Activated CD8-positive, alpha-beta T cell treated with anti-CD3 and anti-CD28 coated beads for 36 hours (primary cell): ENCODE measurements at regions of chr2 and their contacts with region 1.

Region 1: GRCh38 chr2:25700221-25700660 is 26.9 kb upstream of the DTNB start:
- DNase-seq: peak; percentile 52
- ATAC-seq: peak; percentile 81
- H3K4me3 Mint-ChIP-seq: no peak overlapping the region
- H3K27ac Mint-ChIP-seq: no peak overlapping the region
- H3K4me1 Mint-ChIP-seq: peaks cover 3% of the 10 kb centered on the region
- H3K27me3 Mint-ChIP-seq: no peaks in the 10 kb centered on the region
- CTCF ChIP-seq: peak; percentile 74

Region 2: GRCh38 chr2:24382363-24383073 is 1317.7 kb before region 1 on chr2:
- CTCF ChIA-PET with region 1: no interaction called
- POLR2A ChIA-PET with region 1: no interaction called
- intact Hi-C with region 1: no loop called
- DNase-seq: peak; percentile 57
- ATAC-seq: peak; percentile 67
- H3K4me3 Mint-ChIP-seq: no peak overlapping the region
- H3K27ac Mint-ChIP-seq: no peak overlapping the region
- H3K4me1 Mint-ChIP-seq: no peaks in the 10 kb centered on the region
- H3K27me3 Mint-ChIP-seq: no peaks in the 10 kb centered on the region
- CTCF ChIP-seq: peak; percentile 57

Region 3: DNA sequence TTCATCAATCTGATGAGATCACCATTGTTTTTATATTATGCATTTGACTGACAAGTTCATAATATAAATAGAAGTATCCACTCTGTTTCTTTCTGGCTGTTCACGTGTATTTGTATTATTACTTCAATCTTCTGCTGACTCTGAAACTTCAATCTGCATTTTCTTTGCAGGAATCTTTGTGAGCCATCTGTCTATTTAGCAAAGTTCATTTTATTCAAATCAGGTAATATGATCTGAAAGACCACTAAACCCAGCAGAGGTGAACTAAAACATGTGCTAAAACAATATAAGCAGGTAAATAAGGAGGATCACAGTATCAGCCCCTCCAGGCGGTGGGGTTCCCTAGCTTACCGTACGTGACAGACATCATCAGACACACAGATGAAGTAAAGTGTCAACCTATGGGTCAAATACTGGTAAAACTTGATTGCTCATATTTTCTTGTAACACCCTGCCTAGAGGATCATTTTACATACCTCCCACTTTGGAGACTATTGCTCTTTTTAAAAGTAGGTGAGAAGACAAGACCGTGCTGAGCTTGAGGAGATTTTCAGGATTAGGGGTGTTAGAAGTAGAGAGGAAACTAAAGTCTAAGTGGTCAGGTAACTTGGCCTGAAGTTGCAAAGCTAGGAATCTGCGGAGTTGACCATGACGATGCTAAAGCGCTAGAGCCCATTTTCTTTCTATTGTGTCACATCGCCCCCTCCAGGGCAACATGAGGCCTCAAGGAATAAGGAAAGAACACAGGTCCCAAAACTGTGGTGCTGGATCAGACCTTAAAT is 35.9 kb before region 1 on chr2:
- CTCF ChIA-PET with region 1: interaction called, 12 read pairs
- POLR2A ChIA-PET with region 1: no interaction called
- intact Hi-C with region 1: no loop called
- DNase-seq: peak; percentile 56
- ATAC-seq: peak; percentile 60
- H3K4me3 Mint-ChIP-seq: peak overlapping the region; percentile 31
- H3K27ac Mint-ChIP-seq: no peak overlapping the region
- H3K4me1 Mint-ChIP-seq: peaks cover 15% of the 10 kb centered on the region
- H3K27me3 Mint-ChIP-seq: no peaks in the 10 kb centered on the region
- CTCF ChIP-seq: peak; percentile 33

Region 4: GRCh38 chr2:25674077-25674362 is 26.2 kb before region 1 on chr2:
- CTCF ChIA-PET with region 1: interaction called, 10 read pairs
- POLR2A ChIA-PET with region 1: interaction called, 4 read pairs
- intact Hi-C with region 1: no loop called
- DNase-seq: no peak
- ATAC-seq: no peak
- H3K4me3 Mint-ChIP-seq: peak overlapping the region; percentile 75
- H3K27ac Mint-ChIP-seq: peak overlapping the region; percentile 49
- H3K4me1 Mint-ChIP-seq: peaks cover 23% of the 10 kb centered on the region
- H3K27me3 Mint-ChIP-seq: peaks cover 8% of the 10 kb centered on the region
- CTCF ChIP-seq: no peak

Region 5: DNA sequence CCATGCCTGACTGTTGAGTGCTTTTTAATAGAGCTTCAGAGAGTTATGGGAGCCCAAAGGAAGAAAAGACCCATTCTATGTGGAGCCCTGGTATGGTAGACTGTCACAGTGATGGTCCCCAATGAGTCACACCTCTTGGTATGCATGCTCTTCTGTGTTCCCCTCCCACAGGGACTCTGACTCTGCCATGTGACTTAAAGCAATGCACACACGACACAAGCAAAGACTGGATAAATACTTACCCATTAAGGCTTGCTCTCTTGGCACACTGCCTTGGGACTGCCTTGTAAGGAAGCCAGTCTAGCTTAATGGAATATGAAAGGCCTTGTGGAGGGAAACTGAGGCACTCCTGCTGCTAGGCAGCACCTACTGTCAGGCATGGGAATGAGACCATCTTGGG is 10.2 kb before region 1 on chr2:
- CTCF ChIA-PET with region 1: interaction called, 34 read pairs
- POLR2A ChIA-PET with region 1: interaction called, 3 read pairs
- intact Hi-C with region 1: no loop called
- DNase-seq: no peak
- ATAC-seq: peak; percentile 60
- H3K4me3 Mint-ChIP-seq: no peak overlapping the region
- H3K27ac Mint-ChIP-seq: no peak overlapping the region
- H3K4me1 Mint-ChIP-seq: no peaks in the 10 kb centered on the region
- H3K27me3 Mint-ChIP-seq: no peaks in the 10 kb centered on the region
- CTCF ChIP-seq: no peak

Region 6: GRCh38 chr2:25714740-25715139 is 14.5 kb after region 1 on chr2:
- CTCF ChIA-PET with region 1: interaction called, 35 read pairs
- POLR2A ChIA-PET with region 1: no interaction called
- intact Hi-C with region 1: no loop called
- DNase-seq: no peak
- ATAC-seq: no peak
- H3K4me3 Mint-ChIP-seq: no peak overlapping the region
- H3K27ac Mint-ChIP-seq: no peak overlapping the region
- H3K4me1 Mint-ChIP-seq: peaks cover 12% of the 10 kb centered on the region
- H3K27me3 Mint-ChIP-seq: peaks cover 12% of the 10 kb centered on the region
- CTCF ChIP-seq: no peak

Region 7: GRCh38 chr2:25772078-25772477 is 71.8 kb after region 1 on chr2:
- CTCF ChIA-PET with region 1: no interaction called
- POLR2A ChIA-PET with region 1: no interaction called
- intact Hi-C with region 1: no loop called
- DNase-seq: no peak
- ATAC-seq: no peak
- H3K4me3 Mint-ChIP-seq: no peak overlapping the region
- H3K27ac Mint-ChIP-seq: no peak overlapping the region
- H3K4me1 Mint-ChIP-seq: peaks cover 20% of the 10 kb centered on the region
- H3K27me3 Mint-ChIP-seq: no peaks in the 10 kb centered on the region
- CTCF ChIP-seq: no peak

Region 8: GRCh38 chr2:25894135-25894830 is 194.0 kb after region 1 on chr2:
- CTCF ChIA-PET with region 1: no interaction called
- POLR2A ChIA-PET with region 1: no interaction called
- intact Hi-C with region 1: no loop called
- DNase-seq: no peak
- ATAC-seq: no peak
- H3K4me3 Mint-ChIP-seq: no peak overlapping the region
- H3K27ac Mint-ChIP-seq: no peak overlapping the region
- H3K4me1 Mint-ChIP-seq: no peaks in the 10 kb centered on the region
- H3K27me3 Mint-ChIP-seq: no peaks in the 10 kb centered on the region
- CTCF ChIP-seq: no peak